ENCODE measurements at regions of chr15 and their contacts with region 1.

Region 1: GRCh38 chr15:78938658-78939488 is 6.0 kb downstream of the CTSH start:
- DNase-seq: peak; percentile 86
- ATAC-seq: peak; percentile 82
- H3K4me3 ChIP-seq: peak overlapping the region in 3 of 5 experiments; percentile 34 to 42 (median 35)
- H3K4me3 Mint-ChIP-seq: peak overlapping the region; percentile 73
- H3K27ac ChIP-seq: peak overlapping the region; percentile 84 to 86
- H3K27ac Mint-ChIP-seq: peak overlapping the region; percentile 91
- H3K4me1 ChIP-seq: peaks cover 68 to 81% of the 10 kb centered on the region in 2 donors
- H3K4me1 Mint-ChIP-seq: peaks cover 65% of the 10 kb centered on the region
- H3K27me3 ChIP-seq: no peaks in the 10 kb centered on the region
- H3K27me3 Mint-ChIP-seq: no peaks in the 10 kb centered on the region
- CTCF ChIP-seq: no peak

Region 2: DNA sequence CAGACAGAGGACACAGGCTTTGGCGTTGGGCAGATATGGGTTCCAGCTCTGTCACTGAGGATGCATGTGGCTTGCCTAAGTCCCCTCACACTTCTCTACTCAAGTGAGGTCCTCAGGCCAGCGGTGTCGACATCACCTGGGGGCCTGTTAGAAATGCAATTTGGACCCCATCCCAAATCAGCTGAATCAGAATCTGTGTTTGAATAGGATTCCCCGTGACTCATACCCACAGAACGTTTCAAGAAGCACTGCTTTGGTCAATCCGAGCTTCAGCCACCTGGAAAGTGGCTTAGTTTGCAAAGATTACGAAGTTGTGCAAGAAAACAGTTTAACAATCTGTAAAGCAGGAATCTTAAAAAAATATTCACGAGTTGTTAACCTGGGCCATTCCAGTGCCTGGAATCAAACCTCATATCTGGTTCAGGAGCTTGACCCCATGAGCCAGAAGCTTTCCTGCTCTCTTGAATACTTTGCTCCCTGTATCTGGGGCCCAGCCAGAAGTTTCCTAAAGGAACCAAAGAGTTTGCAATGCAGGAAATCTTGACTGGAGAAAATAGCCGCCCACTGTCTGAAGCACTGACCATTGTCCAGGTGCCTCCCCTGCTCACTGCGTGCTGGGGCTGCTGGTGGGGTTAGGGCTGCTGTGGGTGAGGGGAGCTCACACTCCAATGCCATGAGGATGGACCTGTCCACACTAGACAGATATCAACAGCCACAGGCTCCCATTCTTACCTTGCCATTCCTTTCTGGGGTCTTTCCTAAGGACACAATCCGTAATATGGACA is 1097.7 kb before region 1 on chr15:
- CTCF ChIA-PET with region 1: no interaction called
- POLR2A ChIA-PET with region 1: no interaction called
- intact Hi-C with region 1: no loop called
- DNase-seq: no peak
- ATAC-seq: no peak
- H3K4me3 ChIP-seq: no peak overlapping the region
- H3K4me3 Mint-ChIP-seq: no peak overlapping the region
- H3K27ac ChIP-seq: no peak overlapping the region
- H3K27ac Mint-ChIP-seq: no peak overlapping the region
- H3K4me1 ChIP-seq: no peaks in the 10 kb centered on the region
- H3K4me1 Mint-ChIP-seq: no peaks in the 10 kb centered on the region
- H3K27me3 ChIP-seq: peaks cover 0 to 21% (median 2%) of the 10 kb centered on the region in 4 experiments
- H3K27me3 Mint-ChIP-seq: peaks cover 26% of the 10 kb centered on the region
- CTCF ChIP-seq: no peak

Region 3: GRCh38 chr15:78552597-78552996 is 386.3 kb before region 1 on chr15:
- CTCF ChIA-PET with region 1: no interaction called
- POLR2A ChIA-PET with region 1: no interaction called
- intact Hi-C with region 1: no loop called
- DNase-seq: no peak
- ATAC-seq: no peak
- H3K4me3 ChIP-seq: no peak overlapping the region
- H3K4me3 Mint-ChIP-seq: no peak overlapping the region
- H3K27ac ChIP-seq: no peak overlapping the region
- H3K27ac Mint-ChIP-seq: no peak overlapping the region
- H3K4me1 ChIP-seq: no peaks in the 10 kb centered on the region
- H3K4me1 Mint-ChIP-seq: no peaks in the 10 kb centered on the region
- H3K27me3 ChIP-seq: no peaks in the 10 kb centered on the region
- H3K27me3 Mint-ChIP-seq: no peaks in the 10 kb centered on the region
- CTCF ChIP-seq: no peak

Region 4: GRCh38 chr15:78757636-78757905 is 181.3 kb before region 1 on chr15:
- CTCF ChIA-PET with region 1: no interaction called
- POLR2A ChIA-PET with region 1: no interaction called
- intact Hi-C with region 1: loop called (anchors 2 kb)
- DNase-seq: no peak
- ATAC-seq: no peak
- H3K4me3 ChIP-seq: no peak overlapping the region
- H3K4me3 Mint-ChIP-seq: peak overlapping the region; percentile 87
- H3K27ac ChIP-seq: peak overlapping the region; percentile 91 to 99
- H3K27ac Mint-ChIP-seq: peak overlapping the region; percentile 99
- H3K4me1 ChIP-seq: peaks cover 61 to 68% of the 10 kb centered on the region in 2 donors
- H3K4me1 Mint-ChIP-seq: peaks cover 53% of the 10 kb centered on the region
- H3K27me3 ChIP-seq: no peaks in the 10 kb centered on the region
- H3K27me3 Mint-ChIP-seq: no peaks in the 10 kb centered on the region
- CTCF ChIP-seq: no peak

Region 5: DNA sequence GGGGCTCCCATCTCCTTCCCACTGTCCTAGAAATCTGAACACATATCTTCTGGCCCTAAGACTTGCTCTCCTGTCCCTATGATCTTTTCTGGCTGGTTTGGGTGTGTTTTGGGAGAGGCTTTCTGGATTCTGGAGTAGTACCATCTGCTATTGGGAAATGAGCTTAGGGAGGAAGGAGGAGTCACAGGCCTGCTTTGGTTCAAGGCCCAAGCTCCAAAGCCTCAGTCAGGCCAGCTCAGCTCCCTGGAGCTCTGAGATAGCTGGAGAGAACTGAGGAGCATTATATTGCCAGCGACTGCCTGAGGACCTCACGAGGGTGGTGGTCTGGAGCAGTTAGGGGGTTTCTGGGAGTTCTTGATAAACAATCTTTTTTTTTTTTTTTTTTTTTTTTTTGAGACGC is 133.0 kb after region 1 on chr15:
- CTCF ChIA-PET with region 1: no interaction called
- POLR2A ChIA-PET with region 1: no interaction called
- intact Hi-C with region 1: no loop called
- DNase-seq: no peak
- ATAC-seq: no peak
- H3K4me3 ChIP-seq: no peak overlapping the region
- H3K4me3 Mint-ChIP-seq: no peak overlapping the region
- H3K27ac ChIP-seq: no peak overlapping the region
- H3K27ac Mint-ChIP-seq: no peak overlapping the region
- H3K4me1 ChIP-seq: no peaks in the 10 kb centered on the region
- H3K4me1 Mint-ChIP-seq: no peaks in the 10 kb centered on the region
- H3K27me3 ChIP-seq: peaks cover 0 to 3% (median 0%) of the 10 kb centered on the region in 4 experiments
- H3K27me3 Mint-ChIP-seq: no peaks in the 10 kb centered on the region
- CTCF ChIP-seq: no peak

Measured in B cell (primary cell).